BJ (cell line): ENCODE measurements at regions of chr3 and their contacts with region 1.

Region 1: DNA sequence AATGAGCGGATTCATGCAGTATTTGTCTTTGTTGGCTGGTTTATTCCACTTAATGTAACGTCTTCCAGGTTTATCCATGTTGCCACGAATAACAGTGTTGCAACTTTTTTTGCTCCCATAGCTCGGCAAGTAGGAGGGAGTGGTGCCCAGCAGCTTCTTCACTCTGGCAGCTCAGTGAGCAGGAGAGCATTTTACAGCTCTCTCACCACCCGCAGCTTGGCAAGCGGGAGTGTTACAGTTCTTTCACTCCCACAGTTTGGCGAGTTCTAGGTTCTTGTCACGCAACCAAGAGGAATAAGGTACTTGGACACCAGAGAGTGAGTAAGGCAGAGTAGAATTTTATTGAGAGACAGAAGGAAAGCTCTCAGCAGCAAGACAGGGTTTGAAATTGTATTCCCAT is 935.2 kb downstream of the TBL1XR1 start:
- DNase-seq: peak; percentile 3
- H3K4me3 ChIP-seq: no peak overlapping the region
- H3K27me3 ChIP-seq: no peaks in the 10 kb centered on the region
- CTCF ChIP-seq: no peak

Region 2: GRCh38 chr3:176078684-176079305 is 183.3 kb before region 1 on chr3:
- CTCF ChIA-PET with region 1: no interaction called
- POLR2A ChIA-PET with region 1: interaction called, 10 read pairs
- DNase-seq: peak; percentile 58
- H3K4me3 ChIP-seq: no peak overlapping the region
- H3K27me3 ChIP-seq: no peaks in the 10 kb centered on the region
- CTCF ChIP-seq: no peak